ENCODE measurements at regions of chr6 and their contacts with region 1.

Region 1: GRCh38 chr6:43369174-43370022 is at the start of gene ZNF318:
- DNase-seq: peak; percentile 92 to 95
- ATAC-seq: peak; percentile 92 to 94
- H3K4me3 ChIP-seq: peak within 1 kb of the TSS; percentile 75 to 98 (median 86)
- H3K27ac ChIP-seq: peak within 1 kb of the TSS; percentile 85 to 88 (median 86)
- H3K4me1 ChIP-seq: peaks cover 11 to 17% of the 10 kb centered on the region in 2 donors
- H3K27me3 ChIP-seq: no peaks in the 10 kb centered on the region
- CTCF ChIP-seq: no peak
- POLR2A ChIP-seq: peak; percentile 34 to 56
- total RNA-seq, gene ZNF318: 9.9 to 13.8 (median 12.4) TPM

Region 2: DNA sequence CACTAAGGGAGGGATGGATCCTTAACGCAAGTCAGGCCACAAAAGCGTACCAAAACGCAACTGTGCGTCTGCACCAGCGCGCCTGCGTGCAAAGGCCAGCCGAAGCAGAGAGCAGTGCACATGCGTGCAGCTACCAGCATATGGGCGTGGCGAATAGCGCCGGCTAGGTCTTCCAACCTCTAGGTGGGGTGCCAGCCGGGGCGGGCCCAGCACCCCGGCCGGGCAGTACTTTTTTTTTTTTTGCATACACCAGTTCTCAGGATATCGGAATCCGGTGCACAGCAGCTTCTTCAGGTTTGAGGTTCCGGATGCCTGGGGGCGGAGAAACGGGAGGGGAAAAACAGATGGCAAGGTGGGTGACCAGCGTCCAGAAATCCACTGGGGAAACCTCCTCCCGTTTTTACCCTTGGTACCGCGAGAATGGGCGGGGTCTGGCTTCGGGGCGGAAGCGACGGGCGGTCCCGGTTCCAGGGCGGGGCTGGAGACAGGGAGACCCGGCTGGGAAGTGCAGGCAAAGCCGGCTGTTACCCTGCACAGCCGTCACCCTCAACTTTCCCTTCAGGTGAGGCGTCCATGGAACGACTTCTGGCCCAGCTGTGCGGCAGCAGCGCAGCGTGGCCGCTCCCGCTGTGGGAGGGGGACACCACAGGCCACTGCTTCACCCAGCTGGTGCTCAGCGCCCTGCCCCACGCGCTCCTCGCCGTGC is 58.2 kb after region 1 on chr6 and contains the start of gene ABCC10:
- in situ Hi-C with region 1: no loop called
- intact Hi-C with region 1: loop called (anchors 1 kb)
- DNase-seq: peak; percentile 85 to 92
- ATAC-seq: peak; percentile 98
- H3K4me3 ChIP-seq: peak within 1 kb of the TSS; percentile 81 to 92 (median 90)
- H3K27ac ChIP-seq: peak within 1 kb of the TSS; percentile 82 to 87 (median 87)
- H3K4me1 ChIP-seq: peaks cover 13 to 15% of the 10 kb centered on the region in 2 donors
- H3K27me3 ChIP-seq: no peaks in the 10 kb centered on the region
- CTCF ChIP-seq: peak in 2 of 5 experiments; percentile 51 to 53
- POLR2A ChIP-seq: peak; percentile 36 to 53
- total RNA-seq, gene ABCC10: 5.3 to 11.8 (median 8.6) TPM

Region 3: DNA sequence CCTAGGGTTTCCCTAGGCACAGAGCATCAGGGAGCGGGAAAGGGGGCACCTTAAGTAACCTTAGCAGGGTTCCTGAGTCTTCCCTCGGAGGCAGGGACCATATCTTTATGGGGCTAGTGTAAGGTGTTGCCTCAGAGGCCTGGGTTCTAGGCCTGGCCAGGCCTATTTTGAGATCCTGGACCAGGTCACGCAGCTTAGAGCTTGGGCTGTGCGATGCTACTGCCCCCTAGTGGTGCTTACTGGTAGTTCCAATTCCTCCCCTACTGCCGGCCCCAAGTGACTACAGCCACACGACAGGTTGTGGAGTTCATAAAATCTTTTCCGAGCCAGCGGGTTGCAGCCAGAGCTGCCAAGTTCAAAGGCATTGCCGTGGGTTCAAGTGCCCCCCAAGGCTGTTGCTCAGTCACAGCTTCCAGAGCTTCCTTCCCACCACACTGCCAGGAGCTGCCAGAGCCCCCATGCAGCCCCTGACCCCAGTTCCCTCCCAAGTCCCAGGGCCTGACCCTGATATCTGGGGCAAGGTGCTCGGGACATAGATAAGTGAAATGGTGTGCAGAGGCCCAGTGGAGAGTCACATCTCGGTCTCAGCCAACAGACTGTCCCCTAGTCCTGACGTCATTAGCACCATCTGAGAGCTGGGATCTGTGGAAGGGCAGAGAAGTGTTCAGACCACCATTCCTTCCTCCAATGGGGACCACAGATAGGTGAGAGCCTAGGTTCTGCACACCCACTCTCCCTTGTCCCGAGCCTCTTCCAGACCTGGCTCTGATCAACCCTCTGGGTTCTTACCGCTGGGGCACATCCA is 137.5 kb after region 1 on chr6:
- in situ Hi-C with region 1: no loop called
- intact Hi-C with region 1: loop called (anchors 5 kb)
- DNase-seq: peak; percentile 52 to 75
- ATAC-seq: peak; percentile 70 to 79
- H3K4me3 ChIP-seq: no peak overlapping the region
- H3K27ac ChIP-seq: no peak overlapping the region
- H3K4me1 ChIP-seq: peaks cover 7 to 12% of the 10 kb centered on the region in 2 donors
- H3K27me3 ChIP-seq: peaks cover 4 to 7% (median 6%) of the 10 kb centered on the region in 3 donors
- CTCF ChIP-seq: peak; percentile 83 to 98 (median 96)
- POLR2A ChIP-seq: no peak

Region 4: DNA sequence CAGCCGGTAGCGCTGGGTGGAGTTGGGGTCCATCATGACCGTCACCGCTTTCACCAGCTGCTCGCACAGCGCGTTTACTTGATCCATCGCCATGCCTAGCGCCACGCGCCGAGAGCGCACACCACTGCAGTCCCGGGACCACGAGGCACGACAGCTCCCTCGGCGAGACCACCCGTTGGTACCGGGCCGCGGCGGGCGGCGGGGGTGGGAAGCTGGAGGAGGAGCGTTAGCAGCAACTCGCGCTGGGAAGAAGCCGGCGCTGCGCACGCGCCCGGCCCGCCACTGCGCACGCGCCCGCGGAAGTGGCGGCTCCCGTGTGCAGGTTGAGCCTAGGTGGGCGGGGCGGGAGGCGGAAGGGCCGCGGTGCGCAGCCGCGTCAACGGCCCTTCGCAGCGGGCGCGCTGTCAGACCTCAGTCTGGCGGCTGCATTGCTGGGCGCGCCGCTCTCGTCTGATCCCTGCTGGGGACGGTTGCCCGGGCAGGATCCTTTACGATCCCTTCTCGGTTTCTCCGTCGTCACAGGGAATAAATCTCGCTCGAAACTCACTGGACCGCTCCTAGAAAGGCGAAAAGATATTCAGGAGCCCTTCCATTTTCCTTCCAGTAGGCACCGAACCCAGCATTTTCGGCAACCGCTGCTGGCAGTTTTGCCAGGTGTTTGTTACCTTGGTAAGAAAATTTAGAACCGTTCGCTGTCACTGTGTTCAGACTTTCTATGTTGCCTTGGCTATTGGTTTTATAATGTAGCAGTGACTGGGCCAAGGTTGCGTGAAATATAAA is 206.6 kb after region 1 on chr6 and contains the starts of genes POLH and XPO5:
- in situ Hi-C with region 1: no loop called
- intact Hi-C with region 1: loop called (anchors 2 kb)
- DNase-seq: peak; percentile 85 to 92
- ATAC-seq: peak; percentile 90 to 92
- H3K4me3 ChIP-seq: peak within 1 kb of the TSS; percentile 77 to 94 (median 83)
- H3K27ac ChIP-seq: peak within 1 kb of the TSS; percentile 84 to 94 (median 89)
- H3K4me1 ChIP-seq: peaks cover 26 to 37% of the 10 kb centered on the region in 2 donors
- H3K27me3 ChIP-seq: no peaks in the 10 kb centered on the region
- CTCF ChIP-seq: no peak
- POLR2A ChIP-seq: peak; percentile 98
- total RNA-seq, gene POLH: 3.8 to 6.9 (median 5.3) TPM
- total RNA-seq, gene XPO5: 11.8 to 21.8 (median 16.6) TPM